ENCODE measurements at regions of chr12 and their contacts with region 1.

Region 1: DNA sequence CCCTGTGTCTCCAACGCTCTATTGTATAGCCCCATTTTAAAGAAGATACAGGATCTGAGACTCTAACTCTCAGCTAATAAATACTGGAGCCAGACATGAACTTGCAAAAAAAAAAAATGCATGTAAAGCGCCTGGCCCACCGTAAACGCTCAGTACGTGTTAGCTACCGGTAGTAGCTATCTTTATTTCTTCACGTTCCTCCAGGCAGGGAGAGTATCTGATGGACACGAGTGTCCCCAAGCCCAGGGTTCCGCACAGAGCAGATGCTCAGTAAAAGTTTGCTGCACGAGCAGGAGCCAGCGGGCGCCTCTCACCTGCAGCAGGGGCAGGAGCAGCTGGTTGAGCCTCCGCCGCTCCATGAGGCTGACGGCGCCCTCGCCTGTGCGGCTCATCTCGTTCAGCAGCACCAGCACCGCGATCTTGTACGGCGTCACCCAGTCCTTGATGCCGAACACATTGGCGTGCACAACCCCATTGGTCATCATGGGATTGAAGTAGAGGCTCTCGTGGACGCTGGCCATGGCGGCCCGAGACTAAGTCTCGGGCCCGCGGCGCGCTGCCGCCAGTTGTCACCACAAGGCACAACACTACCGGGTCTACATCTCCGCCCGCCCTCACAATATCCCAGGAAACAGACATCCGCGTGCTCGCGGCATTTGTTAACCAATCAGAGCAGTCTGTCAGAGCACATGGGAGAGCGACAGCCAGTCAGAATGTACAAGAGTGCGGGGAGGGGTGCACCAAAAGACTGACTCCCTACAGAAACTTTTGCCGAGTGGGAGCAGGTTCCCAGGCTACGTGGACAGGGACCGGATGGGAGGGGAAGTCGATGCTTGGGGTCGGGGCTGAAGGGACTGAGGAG is at the start of gene ANAPC5:
- DNase-seq: peak; percentile 99
- H3K4me3 Mint-ChIP-seq: peak within 1 kb of the TSS; percentile 86
- H3K27ac Mint-ChIP-seq: peak within 1 kb of the TSS; percentile 97
- H3K4me1 Mint-ChIP-seq: peaks cover 14% of the 10 kb centered on the region
- H3K27me3 Mint-ChIP-seq: no peaks in the 10 kb centered on the region
- CTCF ChIP-seq: no peak
- total RNA-seq, gene ANAPC5: 85.9 and 95.6 TPM in 2 replicates

Region 2: DNA sequence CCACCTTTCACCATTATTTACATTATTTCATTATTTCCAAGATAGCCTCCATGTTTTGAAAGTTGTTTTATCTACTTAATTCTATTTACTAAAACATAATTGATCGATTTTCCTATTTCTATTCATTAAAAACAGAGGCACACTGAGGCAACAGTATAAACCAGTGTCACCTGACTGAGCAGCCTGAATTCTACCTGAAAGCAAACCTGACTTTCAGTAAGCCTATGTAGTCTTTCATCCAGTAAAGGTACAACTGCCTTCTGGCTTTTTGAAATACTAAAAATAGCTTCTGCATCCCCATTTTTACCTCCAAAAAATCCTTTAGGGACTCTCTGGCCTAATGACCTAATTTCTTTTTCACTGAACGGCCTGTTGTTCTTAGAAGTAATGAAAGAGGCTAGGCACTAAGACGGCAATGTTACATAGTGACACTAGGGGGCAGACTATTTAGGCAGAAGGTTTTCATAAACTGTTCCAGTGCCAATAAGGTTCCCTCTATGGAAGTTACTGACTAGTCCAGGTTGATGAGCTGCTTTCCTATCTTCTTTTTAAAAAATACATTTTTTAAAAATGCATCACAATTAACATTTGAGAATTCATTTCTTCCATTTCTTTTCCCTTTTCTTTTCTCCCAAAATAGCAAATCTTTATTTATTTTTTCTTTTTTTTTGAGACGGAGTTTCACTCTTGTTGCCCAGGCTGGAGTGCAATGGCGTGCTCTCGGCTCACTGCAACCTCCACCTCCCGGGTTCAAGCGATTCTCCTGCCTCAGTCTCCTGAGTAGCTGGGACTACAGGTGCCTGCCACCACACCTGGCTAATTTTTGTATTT is 17.3 kb before region 1 on chr12:
- CTCF ChIA-PET with region 1: interaction called, 66 read pairs
- POLR2A ChIA-PET with region 1: interaction called, 17 read pairs
- intact Hi-C with region 1: no loop called
- DNase-seq: peak; percentile 66
- H3K4me3 Mint-ChIP-seq: no peak overlapping the region
- H3K27ac Mint-ChIP-seq: no peak overlapping the region
- H3K4me1 Mint-ChIP-seq: no peaks in the 10 kb centered on the region
- H3K27me3 Mint-ChIP-seq: no peaks in the 10 kb centered on the region
- CTCF ChIP-seq: peak; percentile 67

Region 3: GRCh38 chr12:121364683-121365121 is 12.7 kb after region 1 on chr12:
- CTCF ChIA-PET with region 1: no interaction called
- POLR2A ChIA-PET with region 1: interaction called, 19 read pairs
- intact Hi-C with region 1: no loop called
- DNase-seq: peak; percentile 63
- H3K4me3 Mint-ChIP-seq: no peak overlapping the region
- H3K27ac Mint-ChIP-seq: no peak overlapping the region
- H3K4me1 Mint-ChIP-seq: peaks cover 10% of the 10 kb centered on the region
- H3K27me3 Mint-ChIP-seq: no peaks in the 10 kb centered on the region
- CTCF ChIP-seq: no peak

Region 4: DNA sequence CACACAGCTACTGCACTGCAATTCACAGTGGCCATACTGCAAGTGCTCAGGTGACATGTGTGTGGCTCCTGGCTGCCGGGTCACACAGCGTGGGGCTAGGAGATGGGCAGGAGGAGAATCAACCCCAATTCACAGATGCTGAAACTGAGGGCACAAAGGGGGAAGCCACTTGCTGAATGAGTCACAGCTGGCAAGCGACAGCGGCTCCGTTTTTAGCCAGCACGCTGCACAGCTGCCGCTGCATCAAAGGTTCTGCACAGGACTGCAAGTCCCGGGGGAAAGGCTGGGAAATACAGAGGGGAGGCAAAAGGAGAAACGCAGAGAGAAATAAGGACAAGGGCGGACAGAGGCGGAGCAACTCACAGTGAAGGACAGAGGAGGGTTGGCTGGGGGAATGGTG is 170.9 kb after region 1 on chr12:
- CTCF ChIA-PET with region 1: no interaction called
- POLR2A ChIA-PET with region 1: no interaction called
- intact Hi-C with region 1: no loop called
- DNase-seq: no peak
- H3K4me3 Mint-ChIP-seq: no peak overlapping the region
- H3K27ac Mint-ChIP-seq: no peak overlapping the region
- H3K4me1 Mint-ChIP-seq: no peaks in the 10 kb centered on the region
- H3K27me3 Mint-ChIP-seq: no peaks in the 10 kb centered on the region
- CTCF ChIP-seq: no peak

Measured in MCF 10A (cell line).